ENCODE measurements at regions of chr17 and their contacts with region 1.

Region 1: DNA sequence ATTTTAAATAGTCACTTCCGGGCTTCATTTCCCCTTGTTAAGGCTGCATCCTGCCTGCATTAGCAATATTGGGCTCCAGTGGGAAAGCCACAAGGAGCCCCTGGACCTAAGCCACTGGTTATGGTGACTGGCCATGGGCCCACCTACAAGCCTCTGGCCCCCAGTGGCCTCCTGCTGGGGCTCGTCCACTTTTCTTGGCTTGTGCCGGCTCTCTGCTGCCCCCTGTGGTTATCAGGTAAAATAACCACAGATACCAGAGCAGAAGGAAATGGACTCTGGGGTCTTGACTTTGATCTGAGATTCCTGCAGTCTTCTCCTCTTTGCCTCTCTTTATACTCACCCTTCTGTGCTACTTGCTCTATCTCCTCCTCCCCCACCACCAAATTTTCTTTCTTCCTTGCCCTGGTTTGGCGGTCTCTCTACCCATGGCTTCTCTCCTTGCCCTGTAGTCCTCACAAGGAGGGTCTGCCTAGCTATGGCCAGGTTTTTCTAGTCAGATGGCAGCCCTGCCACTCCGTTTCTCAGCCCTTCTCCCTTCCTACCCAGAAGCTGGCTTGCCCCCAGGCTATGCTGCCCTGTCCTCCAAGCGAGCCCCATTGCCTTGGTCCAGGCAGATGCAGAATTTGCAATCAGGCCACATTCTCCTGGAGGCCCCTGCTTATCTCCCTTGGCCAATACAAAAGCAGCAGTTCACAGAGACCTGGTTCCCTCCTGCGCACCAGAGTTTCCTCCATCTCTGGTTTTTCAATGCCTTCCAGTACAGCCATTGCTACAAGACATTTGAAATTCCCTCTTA is 82.9 kb upstream of the RCVRN start:
- DNase-seq: peak; percentile 57 to 66
- ATAC-seq: peak in 1 of 2 experiments; percentile 88; a peak in 3 of 6 replicates
- H3K4me3 ChIP-seq: no peak overlapping the region
- H3K27ac ChIP-seq: no peak overlapping the region
- H3K4me1 ChIP-seq: no peaks in the 10 kb centered on the region
- CTCF ChIP-seq: peak; percentile 82
- EP300 ChIP-seq: no peak
- POLR2A ChIP-seq: no peak
- RAD21 ChIP-seq: peak; percentile 45

Region 2: DNA sequence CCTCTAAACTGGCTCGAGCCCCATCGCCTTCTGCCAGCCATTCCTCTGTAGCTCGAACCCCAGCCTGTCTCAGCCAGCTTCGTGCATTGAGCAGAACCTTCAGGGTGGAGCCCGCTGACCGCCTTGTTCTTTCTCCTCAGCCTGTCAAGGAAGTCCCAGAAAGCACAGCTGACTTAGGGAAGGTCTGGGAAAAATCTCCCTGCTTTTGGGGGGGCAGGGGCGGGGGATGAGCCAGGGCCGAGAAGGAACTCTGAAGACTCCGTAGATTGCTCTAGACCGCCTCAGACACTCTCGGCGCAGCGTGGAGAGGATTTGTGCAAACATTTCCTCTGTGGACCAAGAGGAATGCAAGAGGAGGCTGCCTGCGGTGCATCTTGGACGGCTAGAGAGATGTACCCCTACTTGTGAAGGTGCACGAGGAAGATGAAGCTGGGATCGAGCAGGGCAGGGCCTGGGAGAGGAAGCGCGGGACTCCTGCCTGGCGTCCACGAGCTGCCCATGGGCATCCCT is 162.3 kb before region 1 on chr17 and contains the start of gene GLP2R:
- CTCF ChIA-PET with region 1: no interaction called
- POLR2A ChIA-PET with region 1: no interaction called
- DNase-seq: no peak
- ATAC-seq: no peak
- H3K4me3 ChIP-seq: no peak within 1 kb of the TSS
- H3K27ac ChIP-seq: peak within 1 kb of the TSS; percentile 22 to 72; a peak in 5 of 6 replicates
- H3K4me1 ChIP-seq: peaks cover 30% of the 10 kb centered on the region
- CTCF ChIP-seq: no peak
- EP300 ChIP-seq: no peak
- POLR2A ChIP-seq: no peak
- RAD21 ChIP-seq: no peak
- polyA plus RNA-seq, gene GLP2R: 48.7 and 76.4 TPM in 2 replicates

Region 3: DNA sequence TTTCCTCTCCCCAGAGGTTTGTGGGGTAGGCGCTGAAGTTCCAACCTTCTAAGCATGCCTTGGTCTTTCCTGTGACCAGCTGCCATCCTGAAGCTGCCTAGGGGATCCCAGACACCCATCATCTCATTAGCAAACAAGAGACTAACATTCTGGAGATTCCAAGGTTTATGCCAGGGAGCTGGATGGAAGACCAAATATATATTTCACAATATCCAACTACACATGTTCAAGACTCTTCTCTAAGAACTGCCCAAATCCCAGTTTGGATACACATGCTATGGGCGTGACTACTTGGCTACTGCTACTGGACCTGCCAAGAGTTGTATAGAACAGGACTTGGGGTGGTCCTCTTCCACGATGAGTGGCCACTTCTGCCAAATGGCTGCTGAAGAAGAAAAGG is 10.1 kb after region 1 on chr17:
- CTCF ChIA-PET with region 1: interaction called, 10 read pairs
- POLR2A ChIA-PET with region 1: no interaction called
- DNase-seq: no peak
- ATAC-seq: no peak
- H3K4me3 ChIP-seq: no peak overlapping the region
- H3K27ac ChIP-seq: no peak overlapping the region
- H3K4me1 ChIP-seq: no peaks in the 10 kb centered on the region
- CTCF ChIP-seq: no peak
- EP300 ChIP-seq: no peak
- POLR2A ChIP-seq: no peak
- RAD21 ChIP-seq: no peak

Measured in A549 (cell line).